Left cardiac atrium (tissue), 4 donors: ENCODE measurements at regions of chr22 and their contacts with region 1.

Region 1: GRCh38 chr22:39236321-39237317 is 8.2 kb downstream of the PDGFB start:
- DNase-seq: peak; percentile 77
- ATAC-seq: peak; percentile 18 to 50

Region 2: GRCh38 chr22:38923463-38924346 is 312.9 kb before region 1 on chr22:
- intact Hi-C with region 1: no loop called
- DNase-seq: peak; percentile 81
- ATAC-seq: peak; percentile 97 to 98

Region 3: DNA sequence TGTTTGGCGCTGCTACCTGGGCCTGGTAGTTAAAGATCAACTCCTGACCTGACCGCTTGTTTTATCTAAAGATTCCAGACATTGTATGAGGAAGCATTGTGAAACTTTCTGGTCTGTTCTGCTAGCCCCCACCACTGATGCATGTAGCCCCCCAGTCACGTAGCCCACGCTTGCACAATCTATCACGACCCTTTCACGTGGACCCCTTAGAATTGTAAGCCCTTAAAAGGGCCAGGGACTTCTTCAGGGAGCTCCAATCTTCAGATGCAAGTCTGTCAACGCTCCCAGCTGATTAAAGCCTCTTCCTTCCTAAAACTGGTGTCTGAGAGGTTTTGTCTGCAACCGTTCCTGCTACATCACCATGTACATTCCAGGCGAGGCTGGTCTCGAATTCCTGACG is 181.0 kb before region 1 on chr22:
- intact Hi-C with region 1: no loop called
- DNase-seq: no peak
- ATAC-seq: no peak

Region 4: GRCh38 chr22:39155421-39155820 is 81.2 kb before region 1 on chr22:
- intact Hi-C with region 1: no loop called
- DNase-seq: no peak
- ATAC-seq: no peak

Region 5: DNA sequence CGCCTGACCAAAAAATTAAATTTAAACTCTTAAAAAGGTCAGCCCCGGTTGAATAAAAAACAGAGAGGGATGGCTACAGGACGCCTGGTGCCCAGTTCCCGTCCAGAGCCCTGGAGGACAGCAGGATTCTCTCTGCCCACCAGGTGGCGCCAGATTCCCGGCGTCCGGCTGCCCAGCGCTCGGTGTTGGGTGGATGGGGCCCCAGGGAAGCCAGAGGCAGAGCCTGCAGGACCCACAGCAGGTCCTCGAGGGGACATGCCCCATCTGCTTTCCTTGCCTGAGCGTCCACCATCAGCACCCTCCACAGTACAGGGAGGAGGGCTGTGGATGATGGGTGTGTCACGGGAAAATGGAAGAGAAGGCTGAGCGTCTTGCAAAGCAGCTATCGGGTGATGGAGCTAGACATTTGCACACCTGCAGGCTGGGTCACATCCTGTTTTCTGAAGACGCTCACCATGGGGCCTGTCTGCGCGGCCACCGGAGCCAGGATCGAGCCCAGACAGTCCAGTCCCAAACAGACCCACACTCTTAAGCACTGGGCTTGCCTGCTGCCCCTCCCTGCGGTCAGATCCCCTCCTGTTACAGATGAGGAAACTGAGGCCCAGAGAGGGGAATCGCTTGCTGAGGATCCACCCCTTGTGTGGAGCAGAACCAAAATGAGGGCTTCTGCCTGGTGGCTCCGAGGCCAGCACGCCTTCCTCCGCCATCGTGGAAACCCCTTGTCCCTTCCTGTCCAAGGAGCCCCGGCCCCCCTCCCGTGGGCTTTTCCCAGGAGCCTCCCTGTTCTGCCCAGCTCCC is 65.6 kb before region 1 on chr22:
- intact Hi-C with region 1: loop called in 1 of 2 experiments (anchors 10 kb)
- DNase-seq: peak; percentile 88
- ATAC-seq: peak; percentile 81 to 88

Region 6: GRCh38 chr22:39183991-39184585 is 52.5 kb before region 1 on chr22:
- intact Hi-C with region 1: loop called (anchors 2 to 10 kb)
- DNase-seq: peak; percentile 54
- ATAC-seq: peak; percentile 43 to 56